Ovary (tissue), 10 donors: ENCODE measurements at regions of chr12 and their contacts with region 1.

Region 1: DNA sequence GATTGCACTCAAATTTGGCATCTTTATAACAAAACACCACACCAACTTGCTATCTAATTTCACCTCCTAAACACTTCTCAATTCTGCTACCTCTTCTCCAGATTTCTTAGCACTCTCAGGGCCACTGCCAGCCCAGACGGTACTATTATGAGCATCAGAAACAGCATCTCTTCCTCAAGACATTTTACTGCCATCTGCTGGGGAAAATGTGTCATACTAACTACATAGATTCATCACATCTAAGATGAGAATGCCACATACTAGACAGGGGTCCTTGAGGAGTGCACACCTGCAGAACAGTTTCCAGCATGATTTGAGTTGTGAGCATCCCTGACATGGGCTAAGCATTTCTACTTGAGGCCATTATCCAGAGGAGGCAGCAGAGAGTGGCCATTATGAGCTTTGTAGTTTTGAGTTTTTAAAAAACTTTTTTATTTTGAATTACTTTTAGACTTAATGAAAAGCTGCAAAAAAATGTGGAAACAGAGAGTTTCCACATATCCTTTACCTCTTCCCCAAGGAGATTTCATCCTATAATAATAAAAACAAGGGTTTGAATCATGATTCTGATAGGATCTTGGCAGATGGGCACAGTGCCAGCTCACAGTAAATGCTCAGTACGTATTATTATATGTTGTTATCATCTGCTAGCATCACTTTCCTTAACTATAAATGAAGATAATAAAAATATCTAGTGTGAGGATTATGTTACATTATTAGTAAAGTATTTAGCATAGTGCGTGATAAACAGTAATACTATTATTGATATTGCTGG is 15.2 kb upstream of the GRIP1 start:
- DNase-seq: no peak
- H3K4me3 ChIP-seq: no peak overlapping the region
- H3K27ac ChIP-seq: no peak overlapping the region
- H3K4me1 ChIP-seq: no peaks in the 10 kb centered on the region
- H3K27me3 ChIP-seq: no peaks in the 10 kb centered on the region
- CTCF ChIP-seq: peak in 1 of 3 donors; percentile 33
- EP300 ChIP-seq: no peak
- POLR2A ChIP-seq: no peak

Region 2: GRCh38 chr12:66860752-66861750 is 167.0 kb after region 1 on chr12:
- intact Hi-C with region 1: loop called in 1 of 4 experiments (anchors 10 kb)
- DNase-seq: peak; percentile 20 to 54 (median 36)
- H3K4me3 ChIP-seq: no peak overlapping the region
- H3K27ac ChIP-seq: no peak overlapping the region
- H3K4me1 ChIP-seq: no peaks in the 10 kb centered on the region
- H3K27me3 ChIP-seq: no peaks in the 10 kb centered on the region
- CTCF ChIP-seq: peak; percentile 23 to 59 (median 50)
- EP300 ChIP-seq: no peak
- POLR2A ChIP-seq: no peak

Region 3: DNA sequence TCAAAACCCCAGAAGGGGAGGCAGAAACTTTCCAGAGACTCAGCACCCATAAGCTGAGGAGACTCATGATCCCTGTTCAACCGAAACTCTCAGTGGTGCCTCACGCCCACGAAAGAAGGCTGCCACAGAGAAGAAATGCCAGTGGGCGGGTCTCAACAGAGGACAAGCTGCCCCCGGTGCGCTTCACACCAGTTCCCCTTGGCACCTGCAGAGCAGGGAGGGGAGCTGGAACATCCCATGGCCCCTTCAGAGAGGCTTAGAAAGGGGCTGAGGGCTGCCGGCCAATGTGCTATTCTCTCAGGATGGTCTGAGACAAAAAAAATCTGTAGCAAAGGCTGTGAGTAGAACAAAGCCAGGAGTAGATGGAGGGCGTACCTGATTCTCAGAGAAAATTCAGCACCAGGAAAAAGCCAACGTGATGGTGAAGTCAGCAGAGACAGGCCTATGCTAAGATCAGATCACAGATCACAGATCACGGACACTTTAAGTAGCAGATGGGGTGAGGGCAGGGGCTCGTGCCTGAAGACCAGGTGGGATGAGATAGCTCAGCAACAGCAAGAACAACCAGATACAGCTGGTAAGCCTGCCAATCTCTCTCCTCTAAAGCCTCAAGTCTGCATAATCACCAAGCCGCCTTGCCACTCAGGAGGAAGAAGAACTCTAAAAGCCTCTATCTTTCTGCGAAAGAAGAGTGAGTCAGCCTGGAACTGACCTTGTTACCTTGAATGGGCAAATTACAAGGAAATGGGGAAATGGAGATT is 191.2 kb after region 1 on chr12:
- intact Hi-C with region 1: no loop called
- DNase-seq: no peak
- H3K4me3 ChIP-seq: no peak overlapping the region
- H3K27ac ChIP-seq: no peak overlapping the region
- H3K4me1 ChIP-seq: no peaks in the 10 kb centered on the region
- H3K27me3 ChIP-seq: no peaks in the 10 kb centered on the region
- CTCF ChIP-seq: no peak
- EP300 ChIP-seq: no peak
- POLR2A ChIP-seq: no peak